Activated CD8-positive, alpha-beta T cell treated with anti-CD3 and anti-CD28 coated beads for 36 hours (primary cell): ENCODE measurements at regions of chr15 and their contacts with region 1.

Region 1: GRCh38 chr15:86743283-86743903 is 663.7 kb downstream of the AGBL1 start:
- DNase-seq: peak; percentile 77
- ATAC-seq: peak; percentile 64
- H3K4me3 Mint-ChIP-seq: no peak overlapping the region
- H3K27ac Mint-ChIP-seq: no peak overlapping the region
- H3K4me1 Mint-ChIP-seq: no peaks in the 10 kb centered on the region
- H3K27me3 Mint-ChIP-seq: peaks cover 3% of the 10 kb centered on the region
- CTCF ChIP-seq: peak; percentile 72

Region 2: DNA sequence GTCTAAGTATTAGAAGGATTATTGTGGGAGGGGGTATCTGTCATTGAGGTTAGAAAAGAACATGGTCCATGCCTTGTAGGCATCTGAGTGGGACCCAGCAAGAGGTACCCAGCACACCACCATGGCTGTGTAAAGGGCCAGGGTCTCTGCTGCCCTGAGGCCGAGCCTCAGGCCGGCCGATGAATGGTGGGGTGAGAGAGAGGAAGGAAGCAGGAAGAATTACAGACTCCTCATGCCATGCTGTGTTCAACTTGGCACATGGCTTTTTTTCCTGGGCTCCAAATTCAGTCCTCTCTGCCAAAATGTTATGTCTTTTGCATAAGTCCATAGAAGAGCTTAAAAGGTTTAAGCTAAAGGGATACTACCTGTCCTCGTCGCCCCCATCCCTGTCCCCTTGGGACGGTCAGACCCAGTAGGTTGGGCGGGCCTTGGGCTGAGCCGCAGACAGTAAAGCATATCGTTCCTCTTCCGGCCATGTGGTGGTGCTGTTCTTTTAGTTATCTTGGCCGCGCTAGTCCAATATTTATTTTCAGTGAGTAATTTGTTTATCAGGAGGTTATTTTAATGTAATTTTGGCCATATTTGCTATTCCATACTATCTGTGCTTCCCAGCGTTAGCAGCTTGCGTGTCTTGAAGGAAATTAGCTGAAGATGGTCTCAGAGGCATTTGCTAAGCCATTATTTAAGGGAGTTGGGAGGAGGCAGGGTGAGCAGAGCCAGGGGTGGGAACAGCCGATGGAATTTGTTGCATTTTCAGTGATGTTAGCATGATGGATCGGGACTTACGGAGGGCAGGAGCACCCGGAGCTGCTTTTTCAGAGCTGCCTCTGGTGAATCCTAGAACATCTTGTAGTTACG is 511.3 kb before region 1 on chr15:
- CTCF ChIA-PET with region 1: interaction called, 7 read pairs
- POLR2A ChIA-PET with region 1: no interaction called
- intact Hi-C with region 1: loop called (anchors 5 kb)
- DNase-seq: peak; percentile 45
- ATAC-seq: peak; percentile 67
- H3K4me3 Mint-ChIP-seq: no peak overlapping the region
- H3K27ac Mint-ChIP-seq: no peak overlapping the region
- H3K4me1 Mint-ChIP-seq: no peaks in the 10 kb centered on the region
- H3K27me3 Mint-ChIP-seq: peaks cover 23% of the 10 kb centered on the region
- CTCF ChIP-seq: peak; percentile 72

Region 3: GRCh38 chr15:86624261-86625036 is 118.9 kb before region 1 on chr15:
- CTCF ChIA-PET with region 1: interaction called, 60 read pairs
- POLR2A ChIA-PET with region 1: no interaction called
- intact Hi-C with region 1: loop called (anchors 2 kb)
- DNase-seq: peak; percentile 92
- ATAC-seq: peak; percentile 99
- H3K4me3 Mint-ChIP-seq: no peak overlapping the region
- H3K27ac Mint-ChIP-seq: peak overlapping the region; percentile 33
- H3K4me1 Mint-ChIP-seq: peaks cover 19% of the 10 kb centered on the region
- H3K27me3 Mint-ChIP-seq: peaks cover 3% of the 10 kb centered on the region
- CTCF ChIP-seq: peak; percentile 59

Region 4: DNA sequence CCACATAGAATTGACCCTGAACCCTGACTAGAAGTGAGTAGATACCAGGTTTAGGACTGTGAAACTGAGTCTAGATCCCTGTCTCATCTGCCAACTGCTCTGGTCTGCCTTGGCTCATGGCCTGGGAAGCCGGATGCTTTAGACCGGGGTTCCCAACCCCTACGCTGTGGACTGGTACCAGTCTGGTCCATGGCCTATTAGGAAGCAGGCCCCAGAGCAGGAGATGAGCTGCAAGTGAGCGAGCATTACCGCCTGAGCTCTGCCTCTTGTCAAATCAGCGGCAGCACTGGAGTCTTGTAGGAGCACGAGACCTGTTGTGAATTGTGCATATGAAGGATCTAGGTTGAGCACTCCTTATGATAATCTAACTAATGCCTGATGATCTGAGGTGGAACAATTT is 70.5 kb after region 1 on chr15:
- CTCF ChIA-PET with region 1: no interaction called
- POLR2A ChIA-PET with region 1: no interaction called
- intact Hi-C with region 1: no loop called
- DNase-seq: no peak
- ATAC-seq: no peak
- H3K4me3 Mint-ChIP-seq: no peak overlapping the region
- H3K27ac Mint-ChIP-seq: no peak overlapping the region
- H3K4me1 Mint-ChIP-seq: no peaks in the 10 kb centered on the region
- H3K27me3 Mint-ChIP-seq: peaks cover 6% of the 10 kb centered on the region
- CTCF ChIP-seq: no peak

Region 5: DNA sequence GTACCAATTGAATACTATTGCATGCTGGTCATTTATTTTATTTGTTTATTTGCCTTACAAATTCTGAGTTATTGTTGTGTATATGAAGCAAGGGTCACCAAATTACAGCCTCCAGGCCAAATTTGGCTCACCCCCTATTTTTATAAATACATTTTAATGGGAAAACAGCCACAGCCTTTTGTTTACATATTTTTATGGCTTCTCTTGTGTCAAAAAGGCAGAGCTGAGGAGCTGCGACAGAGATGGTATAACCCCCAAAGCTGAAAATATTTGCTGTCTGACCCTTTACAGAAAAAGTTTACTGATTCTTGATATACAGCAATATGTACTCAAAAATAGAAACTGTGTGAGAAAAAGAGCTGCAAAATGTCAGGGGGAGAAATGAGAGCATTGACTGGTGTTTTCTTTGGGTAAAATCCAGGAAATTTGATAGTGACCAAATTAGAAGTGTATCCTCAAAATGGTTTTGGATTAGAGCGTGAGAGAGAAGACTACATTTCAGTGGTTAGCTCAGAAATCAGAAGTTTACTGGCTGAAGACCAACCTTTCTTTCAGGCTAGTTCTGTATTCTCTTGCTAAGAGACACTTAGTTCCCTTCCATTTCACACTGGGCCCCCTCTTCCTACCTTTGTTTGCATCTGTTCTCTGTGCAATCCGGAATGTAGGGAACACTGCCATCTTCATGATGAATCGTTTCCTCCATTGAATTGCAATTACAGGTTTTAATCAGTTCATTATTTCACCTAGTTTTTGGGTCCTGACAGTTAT is 94.1 kb after region 1 on chr15:
- CTCF ChIA-PET with region 1: no interaction called
- POLR2A ChIA-PET with region 1: no interaction called
- intact Hi-C with region 1: no loop called
- DNase-seq: no peak
- ATAC-seq: no peak
- H3K4me3 Mint-ChIP-seq: no peak overlapping the region
- H3K27ac Mint-ChIP-seq: no peak overlapping the region
- H3K4me1 Mint-ChIP-seq: no peaks in the 10 kb centered on the region
- H3K27me3 Mint-ChIP-seq: no peaks in the 10 kb centered on the region
- CTCF ChIP-seq: no peak

Region 6: DNA sequence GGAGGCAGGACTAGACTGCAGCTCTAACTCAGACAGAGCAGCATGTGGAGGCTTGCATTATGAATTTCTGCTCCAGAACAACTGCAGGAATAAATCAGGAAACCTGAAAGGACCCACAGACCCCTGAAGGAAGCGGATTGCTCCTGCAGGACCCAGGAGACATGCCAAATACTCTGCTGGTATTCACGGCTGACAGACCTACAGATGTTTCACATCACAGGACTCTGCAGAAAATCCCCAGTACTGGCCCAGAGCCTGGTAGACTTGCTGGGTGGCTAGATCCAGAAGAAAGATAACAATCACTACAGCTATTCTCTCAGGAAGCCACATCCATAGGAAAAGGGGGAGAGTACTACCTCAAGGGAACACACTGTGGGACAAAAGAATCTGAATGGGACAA is 278.4 kb after region 1 on chr15:
- CTCF ChIA-PET with region 1: no interaction called
- POLR2A ChIA-PET with region 1: no interaction called
- intact Hi-C with region 1: no loop called
- DNase-seq: no peak
- ATAC-seq: no peak
- H3K4me3 Mint-ChIP-seq: no peak overlapping the region
- H3K27ac Mint-ChIP-seq: no peak overlapping the region
- H3K4me1 Mint-ChIP-seq: no peaks in the 10 kb centered on the region
- H3K27me3 Mint-ChIP-seq: peaks cover 1% of the 10 kb centered on the region
- CTCF ChIP-seq: no peak